Gastrocnemius medialis (tissue), 4 donors: ENCODE measurements at regions of chr16 and their contacts with region 1.

Region 1: GRCh38 chr16:7452090-7452489 is 119.4 kb downstream of the RBFOX1 start:
- DNase-seq: peak; percentile 57 to 68
- ATAC-seq: peak; percentile 42 to 73
- H3K4me3 ChIP-seq: no peak overlapping the region
- H3K27ac ChIP-seq: peak overlapping the region; percentile 77 to 92 (median 86)
- H3K4me1 ChIP-seq: peaks cover 22 to 34% of the 10 kb centered on the region in 2 donors
- H3K27me3 ChIP-seq: no peaks in the 10 kb centered on the region
- CTCF ChIP-seq: no peak
- POLR2A ChIP-seq: no peak

Region 2: GRCh38 chr16:7321661-7322060 is 130.4 kb before region 1 on chr16:
- in situ Hi-C with region 1: no loop called
- intact Hi-C with region 1: loop called (anchors 5 kb)
- DNase-seq: no peak
- ATAC-seq: no peak
- H3K4me3 ChIP-seq: no peak overlapping the region
- H3K27ac ChIP-seq: no peak overlapping the region
- H3K4me1 ChIP-seq: peaks cover 21 to 27% of the 10 kb centered on the region in 2 donors
- H3K27me3 ChIP-seq: no peaks in the 10 kb centered on the region
- CTCF ChIP-seq: no peak
- POLR2A ChIP-seq: no peak

Region 3: DNA sequence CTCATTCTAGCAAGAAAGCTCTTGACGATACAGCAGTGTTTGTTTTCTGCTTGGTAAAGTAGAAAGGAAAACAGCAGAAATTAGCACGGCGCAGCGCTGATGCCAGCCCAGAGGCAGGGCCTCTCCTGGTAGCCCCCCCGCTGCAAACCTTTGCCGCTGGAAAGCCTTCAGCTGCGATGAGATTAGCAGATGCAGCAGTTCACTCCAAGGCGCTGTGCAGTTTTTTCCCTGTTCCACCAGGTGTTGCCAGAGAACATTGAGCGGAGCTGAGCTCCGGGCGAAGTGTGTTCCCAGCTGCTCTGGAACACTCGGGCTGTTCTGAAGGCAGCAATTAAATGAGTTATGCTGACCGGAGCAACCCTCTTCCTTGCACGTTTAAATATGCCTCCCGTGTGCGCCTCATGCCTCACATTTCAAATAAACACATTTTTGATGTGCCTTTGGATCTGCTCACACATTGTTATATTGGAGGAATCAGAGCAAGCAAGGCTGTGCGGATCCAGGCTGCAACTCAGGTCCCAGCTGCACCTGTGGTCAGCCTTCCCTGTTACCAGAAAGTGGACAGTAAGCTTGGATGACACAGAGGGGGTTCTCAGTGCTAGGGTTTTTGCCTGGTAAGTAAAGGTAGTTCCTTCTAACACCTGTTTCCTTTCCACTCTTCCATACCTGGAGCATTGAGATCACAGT is 46.8 kb before region 1 on chr16:
- in situ Hi-C with region 1: no loop called
- intact Hi-C with region 1: loop called (anchors 2 kb)
- DNase-seq: peak; percentile 70 to 86
- ATAC-seq: peak; percentile 93 to 97
- H3K4me3 ChIP-seq: peak overlapping the region in 1 of 4 donors; percentile 31
- H3K27ac ChIP-seq: peak overlapping the region; percentile 55 to 75 (median 66)
- H3K4me1 ChIP-seq: peaks cover 45 to 50% of the 10 kb centered on the region in 2 donors
- H3K27me3 ChIP-seq: no peaks in the 10 kb centered on the region
- CTCF ChIP-seq: peak; percentile 48 to 75 (median 59)
- POLR2A ChIP-seq: no peak

Region 4: GRCh38 chr16:7497691-7498090 is 45.6 kb after region 1 on chr16:
- in situ Hi-C with region 1: no loop called
- intact Hi-C with region 1: loop called (anchors 2 kb)
- DNase-seq: no peak
- ATAC-seq: no peak
- H3K4me3 ChIP-seq: no peak overlapping the region
- H3K27ac ChIP-seq: peak overlapping the region in 3 of 4 donors; percentile 44 to 92 (median 51)
- H3K4me1 ChIP-seq: peaks cover 29 to 30% of the 10 kb centered on the region in 2 donors
- H3K27me3 ChIP-seq: no peaks in the 10 kb centered on the region
- CTCF ChIP-seq: no peak
- POLR2A ChIP-seq: no peak

Region 5: GRCh38 chr16:7577588-7577987 is 125.5 kb after region 1 on chr16:
- in situ Hi-C with region 1: no loop called
- intact Hi-C with region 1: loop called (anchors 5 kb)
- DNase-seq: peak; percentile 18 to 72
- ATAC-seq: peak; percentile 84 to 93
- H3K4me3 ChIP-seq: no peak overlapping the region
- H3K27ac ChIP-seq: peak overlapping the region; percentile 62 to 76 (median 68)
- H3K4me1 ChIP-seq: peaks cover 3 to 4% of the 10 kb centered on the region in 2 donors
- H3K27me3 ChIP-seq: no peaks in the 10 kb centered on the region
- CTCF ChIP-seq: no peak
- POLR2A ChIP-seq: no peak